ENCODE measurements at regions of chr20 and their contacts with region 1.

Region 1: GRCh38 chr20:49330544-49331239 is 52.8 kb upstream of the ZNFX1 start:
- DNase-seq: no peak
- ATAC-seq: no peak
- H3K4me3 ChIP-seq: no peak overlapping the region
- H3K27ac ChIP-seq: no peak overlapping the region
- H3K4me1 ChIP-seq: peaks cover 0 to 4% of the 10 kb centered on the region in 2 experiments; a peak in 2 of 5 replicates
- H3K27me3 ChIP-seq: peaks cover 31 to 48% of the 10 kb centered on the region in 2 experiments
- CTCF ChIP-seq: no peak
- EP300 ChIP-seq: no peak
- POLR2A ChIP-seq: no peak
- RAD21 ChIP-seq: no peak

Region 2: GRCh38 chr20:49024220-49024619 is 306.5 kb before region 1 on chr20:
- CTCF ChIA-PET with region 1: no interaction called
- POLR2A ChIA-PET with region 1: no interaction called
- in situ Hi-C with region 1: no loop called
- intact Hi-C with region 1: no loop called
- DNase-seq: no peak
- ATAC-seq: no peak
- H3K4me3 ChIP-seq: no peak overlapping the region
- H3K27ac ChIP-seq: no peak overlapping the region
- H3K4me1 ChIP-seq: no peaks in the 10 kb centered on the region
- H3K27me3 ChIP-seq: no peaks in the 10 kb centered on the region
- CTCF ChIP-seq: no peak
- EP300 ChIP-seq: no peak
- POLR2A ChIP-seq: no peak
- RAD21 ChIP-seq: no peak

Region 3: GRCh38 chr20:49207076-49207475 is 123.6 kb before region 1 on chr20:
- CTCF ChIA-PET with region 1: no interaction called
- POLR2A ChIA-PET with region 1: no interaction called
- in situ Hi-C with region 1: no loop called
- intact Hi-C with region 1: no loop called
- DNase-seq: peak in 2 of 4 experiments; percentile 23 to 33
- ATAC-seq: peak; percentile 85
- H3K4me3 ChIP-seq: no peak overlapping the region
- H3K27ac ChIP-seq: no peak overlapping the region
- H3K4me1 ChIP-seq: no peaks in the 10 kb centered on the region; a peak in 1 of 5 replicates
- H3K27me3 ChIP-seq: no peaks in the 10 kb centered on the region
- CTCF ChIP-seq: peak; percentile 37 to 38 (median 38); a peak in 4 of 6 replicates
- EP300 ChIP-seq: no peak
- POLR2A ChIP-seq: no peak
- RAD21 ChIP-seq: peak in 1 of 2 experiments; percentile 10; a peak in 1 of 4 replicates

Region 4: GRCh38 chr20:49384437-49385088 is 53.9 kb after region 1 on chr20:
- CTCF ChIA-PET with region 1: interaction called, 4 read pairs
- POLR2A ChIA-PET with region 1: interaction called, 3 read pairs
- in situ Hi-C with region 1: no loop called
- intact Hi-C with region 1: loop called (anchors 5 kb)
- DNase-seq: peak; percentile 67 to 87 (median 80)
- ATAC-seq: peak; percentile 94
- H3K4me3 ChIP-seq: no peak overlapping the region
- H3K27ac ChIP-seq: no peak overlapping the region
- H3K4me1 ChIP-seq: no peaks in the 10 kb centered on the region
- H3K27me3 ChIP-seq: peaks cover 7 to 50% of the 10 kb centered on the region in 2 experiments; a peak in 3 of 5 replicates
- CTCF ChIP-seq: peak; percentile 77 to 91 (median 90)
- EP300 ChIP-seq: no peak
- POLR2A ChIP-seq: no peak
- RAD21 ChIP-seq: peak in 1 of 2 experiments; percentile 56; a peak in 3 of 4 replicates

Region 5: GRCh38 chr20:49541733-49542513 is 211.2 kb after region 1 on chr20:
- CTCF ChIA-PET with region 1: interaction called, 98 read pairs
- POLR2A ChIA-PET with region 1: no interaction called
- in situ Hi-C with region 1: loop called (anchors 5 kb)
- intact Hi-C with region 1: no loop called
- DNase-seq: peak; percentile 80 to 90 (median 88)
- ATAC-seq: peak; percentile 86
- H3K4me3 ChIP-seq: no peak overlapping the region
- H3K27ac ChIP-seq: no peak overlapping the region
- H3K4me1 ChIP-seq: peaks cover 0 to 4% of the 10 kb centered on the region in 2 experiments; a peak in 1 of 5 replicates
- H3K27me3 ChIP-seq: peaks cover 2 to 18% of the 10 kb centered on the region in 2 experiments; a peak in 2 of 5 replicates
- CTCF ChIP-seq: peak; percentile 94 to 99 (median 99)
- EP300 ChIP-seq: 0 out of 2 replicates have a peak, but pooled peaks have one; percentile 26
- POLR2A ChIP-seq: no peak
- RAD21 ChIP-seq: peak; percentile 74 to 94

Region 6: DNA sequence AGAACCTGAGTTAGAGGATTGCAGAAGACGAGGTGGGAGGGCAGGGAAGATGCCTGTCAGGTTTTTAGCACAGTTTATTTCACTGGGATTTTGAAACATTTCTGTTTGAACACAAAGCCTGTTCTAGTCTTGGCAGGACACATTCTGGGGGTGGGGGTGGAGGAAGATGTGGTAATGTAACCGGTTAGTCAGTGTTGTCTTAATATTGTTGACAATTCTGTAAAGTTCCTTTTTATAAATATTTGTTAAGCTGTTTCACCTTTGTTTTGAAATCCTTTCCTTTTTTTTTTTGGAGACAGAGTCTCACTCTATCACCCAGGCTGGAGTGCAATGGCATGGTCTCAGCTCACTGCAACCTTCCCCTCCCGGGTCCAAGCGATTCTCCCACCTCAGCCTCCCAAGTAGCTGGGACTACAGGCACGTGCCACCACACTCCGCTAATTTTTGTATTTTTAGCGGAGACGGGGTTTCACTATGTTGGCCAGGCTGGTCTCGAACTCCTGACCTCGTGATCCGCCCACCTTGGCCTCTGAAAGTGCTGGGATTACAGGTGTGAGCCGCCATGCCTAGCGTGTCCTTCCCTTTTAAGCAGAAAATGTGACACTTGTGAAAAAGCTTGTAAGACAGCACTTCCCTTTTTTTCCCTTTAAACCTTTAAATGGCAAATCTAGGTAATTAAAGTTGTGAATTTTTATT is 502.1 kb after region 1 on chr20:
- CTCF ChIA-PET with region 1: no interaction called
- POLR2A ChIA-PET with region 1: no interaction called
- in situ Hi-C with region 1: no loop called
- intact Hi-C with region 1: no loop called
- DNase-seq: no peak
- ATAC-seq: no peak
- H3K4me3 ChIP-seq: no peak overlapping the region
- H3K27ac ChIP-seq: no peak overlapping the region
- H3K4me1 ChIP-seq: peaks cover 2 to 11% of the 10 kb centered on the region in 2 experiments; a peak in 3 of 5 replicates
- H3K27me3 ChIP-seq: no peaks in the 10 kb centered on the region
- CTCF ChIP-seq: no peak
- EP300 ChIP-seq: no peak
- POLR2A ChIP-seq: no peak
- RAD21 ChIP-seq: no peak

Measured in K562 (cell line).